ENCODE measurements at regions of chr14 and their contacts with region 1.

Region 1: DNA sequence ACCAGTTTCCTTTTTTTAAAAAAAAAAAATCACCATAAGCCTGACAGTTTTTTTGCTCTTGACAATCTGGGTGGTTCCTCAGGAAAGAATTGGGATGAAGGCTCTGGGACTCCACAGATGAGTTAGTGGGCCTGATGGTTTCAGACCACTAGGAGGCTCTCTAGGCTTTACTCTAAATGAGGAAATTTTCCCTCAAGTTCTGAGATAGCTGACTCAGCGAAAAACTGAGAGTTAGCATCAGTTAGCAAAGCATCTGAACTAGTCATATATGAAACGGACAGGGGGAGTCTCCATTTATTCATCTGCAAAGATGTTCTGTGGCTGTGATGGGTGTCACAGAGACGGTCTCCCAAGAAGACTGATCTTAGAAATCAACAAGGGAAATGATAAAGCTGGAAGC is 314.3 kb upstream of the OR4E1 start:
- DNase-seq: peak in 1 of 9 donors; percentile 13
- ATAC-seq: peak; percentile 54
- H3K4me3 ChIP-seq: no peak overlapping the region
- H3K4me3 Mint-ChIP-seq: peak overlapping the region in 5 of 10 donors; percentile 16 to 60 (median 22)
- H3K27ac ChIP-seq: no peak overlapping the region
- H3K27ac Mint-ChIP-seq: peak overlapping the region in 5 of 9 donors; percentile 25 to 74 (median 45)
- H3K4me1 ChIP-seq: no peaks in the 10 kb centered on the region
- H3K4me1 Mint-ChIP-seq: peaks cover 0 to 31% (median 11%) of the 10 kb centered on the region in 7 donors
- H3K27me3 ChIP-seq: no peaks in the 10 kb centered on the region
- H3K27me3 Mint-ChIP-seq: peaks cover 0 to 17% (median 0%) of the 10 kb centered on the region in 5 donors

Region 2: DNA sequence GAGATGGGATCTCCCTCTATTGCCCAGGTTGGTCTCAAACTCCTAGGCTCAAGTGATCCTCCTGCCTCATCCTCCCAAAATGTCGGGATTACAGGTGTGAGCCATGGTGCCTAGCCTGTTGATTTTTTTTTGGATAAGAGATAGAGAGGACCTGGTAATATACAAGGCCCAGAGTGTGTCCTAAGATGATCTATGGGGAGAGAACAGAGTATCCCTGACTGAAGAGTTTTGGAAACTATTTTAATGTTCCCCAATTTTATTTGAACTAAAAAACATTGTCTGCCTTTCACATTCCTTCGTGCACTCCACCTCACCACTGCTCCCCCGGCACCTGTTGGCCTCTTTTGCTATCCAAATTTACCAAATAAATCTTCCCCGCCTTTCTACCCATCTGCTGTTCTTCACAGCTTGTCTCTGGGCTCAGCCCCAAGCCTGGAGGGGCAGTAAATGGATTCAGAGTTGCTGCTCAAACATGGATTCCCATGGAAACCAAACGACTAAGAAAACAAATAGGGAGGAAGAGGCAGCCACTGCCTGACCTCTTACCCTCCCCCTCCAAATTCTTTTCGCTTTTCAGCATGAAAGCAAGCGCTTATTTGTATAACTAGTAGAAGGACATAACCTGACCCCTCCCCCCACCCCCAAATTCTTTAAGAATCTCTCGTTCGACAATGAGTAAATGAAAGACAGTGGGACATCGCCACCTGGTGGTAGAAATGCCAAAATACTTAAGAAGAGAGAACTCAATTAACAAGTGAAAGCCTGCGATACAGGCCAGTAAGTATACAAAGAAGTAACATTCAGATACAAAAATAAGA is 430.6 kb before region 1 on chr14:
- CTCF ChIA-PET with region 1: no interaction called
- POLR2A ChIA-PET with region 1: no interaction called
- intact Hi-C with region 1: no loop called
- DNase-seq: peak; percentile 25 to 81 (median 74)
- ATAC-seq: peak; percentile 84
- H3K4me3 ChIP-seq: peak overlapping the region; percentile 27
- H3K4me3 Mint-ChIP-seq: peak overlapping the region in 9 of 10 donors; percentile 14 to 71 (median 46)
- H3K27ac ChIP-seq: peak overlapping the region; percentile 24
- H3K27ac Mint-ChIP-seq: peak overlapping the region in 8 of 9 donors; percentile 6 to 92 (median 64)
- H3K4me1 ChIP-seq: peaks cover 0 to 4% of the 10 kb centered on the region in 2 donors
- H3K4me1 Mint-ChIP-seq: peaks cover 2 to 12% (median 7%) of the 10 kb centered on the region in 7 donors
- H3K27me3 ChIP-seq: no peaks in the 10 kb centered on the region
- H3K27me3 Mint-ChIP-seq: peaks cover 0 to 2% (median 0%) of the 10 kb centered on the region in 5 donors

Region 3: DNA sequence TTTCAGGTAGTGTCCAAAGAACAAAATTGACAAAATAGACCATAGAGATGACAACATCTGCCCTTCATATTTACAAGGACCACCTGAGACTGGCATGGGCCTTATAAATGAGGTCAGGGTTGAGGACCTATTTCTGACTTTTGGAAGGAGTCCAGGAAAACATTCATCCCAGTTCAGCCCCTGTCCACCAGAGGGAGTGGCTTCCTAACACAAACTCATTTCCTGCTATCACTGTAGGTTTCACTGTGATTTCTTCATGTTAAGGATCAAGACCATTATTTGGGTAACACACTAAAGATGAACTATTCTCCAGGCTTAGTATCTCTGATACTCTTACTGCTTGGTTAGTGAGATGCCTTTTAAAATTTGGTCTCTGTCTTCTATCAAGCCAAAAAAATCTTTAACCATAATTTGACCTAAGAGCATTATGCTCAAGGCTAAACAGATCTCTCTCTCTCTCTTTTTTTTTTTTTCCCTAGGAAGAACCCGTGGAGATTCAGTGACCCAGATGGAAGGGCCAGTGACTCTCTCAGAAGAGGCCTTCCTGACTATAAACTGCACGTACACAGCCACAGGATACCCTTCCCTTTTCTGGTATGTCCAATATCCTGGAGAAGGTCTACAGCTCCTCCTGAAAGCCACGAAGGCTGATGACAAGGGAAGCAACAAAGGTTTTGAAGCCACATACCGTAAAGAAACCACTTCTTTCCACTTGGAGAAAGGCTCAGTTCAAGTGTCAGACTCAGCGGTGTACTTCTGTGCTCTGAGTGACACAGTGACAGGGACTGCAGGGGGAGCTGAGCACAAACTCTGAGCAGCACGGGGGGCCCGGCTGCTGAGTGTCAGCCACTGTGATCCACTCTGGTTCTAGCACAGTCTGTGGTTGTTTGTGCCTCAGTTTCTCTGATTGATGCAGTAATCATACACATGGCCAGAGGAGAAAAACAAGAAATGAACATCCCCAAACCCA is 46.8 kb before region 1 on chr14:
- CTCF ChIA-PET with region 1: no interaction called
- POLR2A ChIA-PET with region 1: no interaction called
- intact Hi-C with region 1: loop called in 1 of 2 experiments (anchors 1 kb)
- DNase-seq: peak in 7 of 9 donors; percentile 42 to 56 (median 51)
- ATAC-seq: peak; percentile 78
- H3K4me3 ChIP-seq: peak overlapping the region; percentile 30
- H3K4me3 Mint-ChIP-seq: peak overlapping the region; percentile 63 to 88 (median 78)
- H3K27ac ChIP-seq: peak overlapping the region; percentile 56
- H3K27ac Mint-ChIP-seq: peak overlapping the region; percentile 79 to 95 (median 90)
- H3K4me1 ChIP-seq: peaks cover 0 to 8% of the 10 kb centered on the region in 2 donors
- H3K4me1 Mint-ChIP-seq: peaks cover 5 to 48% (median 31%) of the 10 kb centered on the region in 7 donors
- H3K27me3 ChIP-seq: no peaks in the 10 kb centered on the region
- H3K27me3 Mint-ChIP-seq: peaks cover 0 to 33% (median 0%) of the 10 kb centered on the region in 5 donors

Region 4: DNA sequence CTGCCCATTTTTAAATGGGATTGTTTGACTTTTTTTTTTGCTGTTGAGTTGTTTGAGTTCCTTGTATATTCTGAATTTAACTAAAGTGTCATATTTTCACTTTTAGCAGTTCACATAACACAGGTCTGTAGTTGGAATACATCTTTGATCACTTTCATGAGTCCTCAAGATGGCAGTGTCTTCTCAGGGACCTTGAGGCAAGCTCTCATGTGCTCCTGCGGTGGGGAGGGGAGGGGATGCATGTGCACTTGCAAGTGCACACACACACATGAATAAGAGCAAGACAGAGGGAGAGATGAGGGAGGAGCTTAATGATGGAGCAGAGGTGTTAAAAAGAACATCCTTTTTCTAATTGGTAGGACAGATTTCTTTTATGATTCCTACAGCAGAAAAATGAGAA is 22.9 kb before region 1 on chr14:
- CTCF ChIA-PET with region 1: interaction called, 3 read pairs
- POLR2A ChIA-PET with region 1: interaction called, 3 read pairs
- intact Hi-C with region 1: loop called in 1 of 2 experiments (anchors 1 kb)
- DNase-seq: peak in 8 of 9 donors; percentile 21 to 72 (median 61)
- ATAC-seq: peak; percentile 88
- H3K4me3 ChIP-seq: no peak overlapping the region
- H3K4me3 Mint-ChIP-seq: peak overlapping the region; percentile 50 to 78 (median 70)
- H3K27ac ChIP-seq: no peak overlapping the region
- H3K27ac Mint-ChIP-seq: peak overlapping the region; percentile 12 to 90 (median 78)
- H3K4me1 ChIP-seq: no peaks in the 10 kb centered on the region
- H3K4me1 Mint-ChIP-seq: peaks cover 8 to 48% (median 33%) of the 10 kb centered on the region in 7 donors
- H3K27me3 ChIP-seq: no peaks in the 10 kb centered on the region
- H3K27me3 Mint-ChIP-seq: peaks cover 0 to 12% (median 0%) of the 10 kb centered on the region in 5 donors

Region 5: DNA sequence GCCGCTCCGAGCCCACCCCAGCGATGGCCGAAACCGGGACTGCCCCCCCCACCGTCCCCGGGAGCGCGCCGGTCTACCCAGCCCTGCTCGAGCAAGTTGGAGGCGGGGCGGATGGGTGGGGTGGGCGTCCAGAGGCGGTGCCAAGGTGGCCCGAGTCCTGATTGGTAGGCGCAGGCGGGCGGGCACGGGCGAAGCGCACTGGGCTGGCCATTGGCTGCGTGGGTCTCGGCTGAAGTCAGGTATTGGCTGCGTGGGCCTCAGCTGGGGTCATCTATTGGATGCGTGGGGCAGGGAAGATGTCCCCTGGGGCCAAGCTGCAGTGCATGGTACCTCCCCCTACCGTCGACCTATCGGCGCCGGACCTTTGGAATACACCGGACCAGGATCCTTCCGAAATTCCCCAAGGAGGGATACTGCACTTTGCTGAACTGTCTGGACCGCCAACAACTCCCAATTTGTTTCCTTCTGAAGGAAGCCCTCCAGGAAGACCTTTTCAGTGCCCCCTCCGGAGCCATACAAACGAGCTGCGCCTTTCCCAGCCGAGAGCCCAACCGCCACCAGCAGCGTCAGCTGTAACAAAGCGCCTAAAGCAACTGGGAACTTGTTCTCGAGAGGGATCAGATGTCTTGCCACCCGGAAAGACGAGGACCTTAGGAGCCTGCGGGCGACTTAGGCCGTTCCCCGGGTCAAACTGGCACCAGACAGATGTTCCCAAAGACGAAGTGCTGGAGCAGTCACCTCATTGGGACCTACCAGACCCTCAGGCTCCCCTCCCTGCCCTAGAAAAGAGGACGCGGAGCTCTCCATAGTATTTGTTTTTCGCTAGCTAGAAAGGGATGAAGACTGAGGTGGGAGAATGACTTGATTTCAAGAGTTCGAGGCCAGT is 1298.3 kb after region 1 on chr14 and contains the start of gene HOMEZ:
- CTCF ChIA-PET with region 1: no interaction called
- POLR2A ChIA-PET with region 1: no interaction called
- intact Hi-C with region 1: no loop called
- DNase-seq: peak; percentile 89 to 97 (median 94)
- ATAC-seq: peak; percentile 99
- H3K4me3 ChIP-seq: peak within 1 kb of the TSS; percentile 84
- H3K4me3 Mint-ChIP-seq: peak within 1 kb of the TSS; percentile 92 to 100 (median 96)
- H3K27ac ChIP-seq: peak within 1 kb of the TSS; percentile 89
- H3K27ac Mint-ChIP-seq: peak within 1 kb of the TSS; percentile 83 to 98 (median 93)
- H3K4me1 ChIP-seq: peaks cover 3 to 6% of the 10 kb centered on the region in 2 donors
- H3K4me1 Mint-ChIP-seq: peaks cover 15 to 37% (median 30%) of the 10 kb centered on the region in 7 donors
- H3K27me3 ChIP-seq: no peaks in the 10 kb centered on the region
- H3K27me3 Mint-ChIP-seq: no peaks in the 10 kb centered on the region
- total RNA-seq, gene HOMEZ: 5.2 to 20.4 (median 15.5) TPM

Measured in naive thymus-derived CD4-positive, alpha-beta T cell (primary cell).